ENCODE measurements at regions of chr1 and their contacts with region 1.

Region 1: GRCh38 chr1:77825131-77825709 is 45.8 kb downstream of the MIGA1 start:
- DNase-seq: peak; percentile 74
- ATAC-seq: peak; percentile 53
- H3K4me3 ChIP-seq: no peak overlapping the region
- H3K27ac ChIP-seq: 0 out of 2 replicates have a peak overlapping the region, but pooled peaks have one; percentile 53
- H3K4me1 ChIP-seq: peaks cover 15% of the 10 kb centered on the region
- H3K27me3 ChIP-seq: no peaks in the 10 kb centered on the region
- CTCF ChIP-seq: peak; percentile 65

Region 2: DNA sequence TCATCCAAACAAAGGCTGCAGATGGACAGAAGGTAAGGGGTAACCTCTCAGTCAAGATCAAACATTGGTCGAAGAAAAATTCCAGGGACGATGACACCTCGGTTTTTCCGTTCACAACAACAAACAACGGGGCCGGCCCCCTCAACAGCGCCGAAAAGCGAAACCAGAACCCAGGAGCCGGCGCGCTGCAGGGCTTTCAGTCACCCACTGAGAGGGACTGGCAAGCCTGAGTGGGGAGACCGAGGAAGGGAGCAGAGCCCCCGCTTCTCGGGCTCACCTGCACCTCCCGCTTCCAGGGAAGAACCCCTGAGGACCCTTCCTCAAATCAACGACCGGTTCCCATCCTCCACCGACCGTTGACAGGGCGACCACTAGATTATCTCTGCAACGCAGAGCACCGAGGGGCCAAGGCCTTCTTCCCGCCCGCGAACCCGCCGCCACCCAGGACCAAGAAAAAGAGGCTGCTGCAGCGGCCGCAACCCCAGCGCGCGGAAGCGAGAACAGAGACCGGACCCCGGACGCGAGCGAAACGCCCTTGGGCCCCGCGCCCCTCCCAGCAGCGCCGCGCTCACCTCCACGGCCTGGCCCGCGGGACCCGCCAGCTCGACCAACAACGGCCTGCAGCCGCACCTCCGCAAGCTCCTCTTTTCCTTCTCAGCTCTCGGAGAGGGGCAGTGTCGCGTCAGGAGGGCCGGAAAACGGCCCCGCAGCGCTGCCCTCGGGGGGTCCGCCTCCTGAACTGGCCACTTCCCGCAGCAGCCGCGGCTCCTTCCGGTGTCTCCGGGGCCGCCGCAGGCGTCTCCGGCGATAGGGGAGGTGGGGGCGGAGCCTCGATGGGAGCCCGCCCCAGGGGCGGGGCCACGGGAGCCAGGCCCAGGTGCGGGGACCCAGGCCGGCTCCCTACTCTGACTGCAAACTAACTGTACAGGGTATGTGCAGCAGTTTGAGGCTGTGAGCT is 65.9 kb before region 1 on chr1 and contains the start of gene USP33:
- CTCF ChIA-PET with region 1: no interaction called
- POLR2A ChIA-PET with region 1: no interaction called
- intact Hi-C with region 1: loop called (anchors 10 kb)
- DNase-seq: peak; percentile 93
- ATAC-seq: peak; percentile 84
- H3K4me3 ChIP-seq: peak within 1 kb of the TSS; percentile 81
- H3K27ac ChIP-seq: peak within 1 kb of the TSS; percentile 68
- H3K4me1 ChIP-seq: peaks cover 26% of the 10 kb centered on the region
- H3K27me3 ChIP-seq: no peaks in the 10 kb centered on the region
- CTCF ChIP-seq: no peak
- total RNA-seq, gene USP33: 42.6 and 45.2 TPM in 2 replicates

Region 3: GRCh38 chr1:77900687-77901293 is 75.6 kb after region 1 on chr1:
- CTCF ChIA-PET with region 1: no interaction called
- POLR2A ChIA-PET with region 1: no interaction called
- intact Hi-C with region 1: loop called (anchors 1 kb)
- DNase-seq: peak; percentile 69
- ATAC-seq: peak; percentile 85
- H3K4me3 ChIP-seq: no peak overlapping the region
- H3K27ac ChIP-seq: no peak overlapping the region
- H3K4me1 ChIP-seq: peaks cover 10% of the 10 kb centered on the region
- H3K27me3 ChIP-seq: no peaks in the 10 kb centered on the region
- CTCF ChIP-seq: peak; percentile 93

Region 4: GRCh38 chr1:78114034-78114956 is 289.1 kb after region 1 on chr1:
- CTCF ChIA-PET with region 1: no interaction called
- POLR2A ChIA-PET with region 1: no interaction called
- intact Hi-C with region 1: loop called (anchors 10 kb)
- DNase-seq: peak; percentile 91
- ATAC-seq: peak; percentile 76
- H3K4me3 ChIP-seq: no peak overlapping the region
- H3K27ac ChIP-seq: no peak overlapping the region
- H3K4me1 ChIP-seq: peaks cover 4% of the 10 kb centered on the region; the same call in 1 of the 2 replicates
- H3K27me3 ChIP-seq: no peaks in the 10 kb centered on the region
- CTCF ChIP-seq: peak; percentile 99

Measured in PC-3 (cell line).